Astrocyte of the cerebellum (primary cell): ENCODE measurements at regions of chr1 and their contacts with region 1.

Region 1: DNA sequence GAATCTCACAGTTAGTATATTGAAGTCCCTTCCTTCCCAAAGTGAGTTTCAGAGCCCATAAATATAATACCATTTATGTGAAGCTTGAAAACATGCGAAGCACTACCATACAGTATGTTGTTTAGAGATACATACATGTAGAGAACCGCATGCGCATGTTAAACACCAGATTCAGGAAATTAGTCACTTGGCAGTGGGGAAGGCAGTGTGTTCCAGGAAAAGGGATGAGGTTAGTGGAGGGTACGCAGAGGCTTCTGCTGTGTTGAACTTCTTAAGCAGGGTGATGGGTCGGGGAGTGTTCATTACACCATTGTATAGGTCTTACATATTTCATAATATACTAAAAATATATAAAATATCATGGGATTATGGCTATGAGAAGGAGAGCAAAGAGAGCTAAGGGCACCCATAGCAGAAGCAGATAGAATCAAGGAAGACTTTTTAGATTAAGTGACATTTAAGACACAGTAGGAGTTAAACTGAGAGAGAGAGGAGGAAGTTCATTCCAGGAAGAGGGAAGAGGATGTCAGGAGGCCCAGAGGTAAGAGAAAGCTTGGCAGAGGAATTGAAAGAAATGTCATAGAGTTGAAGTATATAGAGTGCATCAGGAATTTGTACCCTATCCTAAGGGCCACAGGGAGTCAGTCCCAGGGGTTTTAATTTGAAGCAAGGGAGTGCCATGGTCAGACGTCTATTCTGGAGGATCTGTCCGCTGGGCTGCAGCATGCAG is 43.5 kb upstream of the SARS1 start:
- DNase-seq: no peak
- H3K4me3 ChIP-seq: no peak overlapping the region
- CTCF ChIP-seq: no peak

Region 2: DNA sequence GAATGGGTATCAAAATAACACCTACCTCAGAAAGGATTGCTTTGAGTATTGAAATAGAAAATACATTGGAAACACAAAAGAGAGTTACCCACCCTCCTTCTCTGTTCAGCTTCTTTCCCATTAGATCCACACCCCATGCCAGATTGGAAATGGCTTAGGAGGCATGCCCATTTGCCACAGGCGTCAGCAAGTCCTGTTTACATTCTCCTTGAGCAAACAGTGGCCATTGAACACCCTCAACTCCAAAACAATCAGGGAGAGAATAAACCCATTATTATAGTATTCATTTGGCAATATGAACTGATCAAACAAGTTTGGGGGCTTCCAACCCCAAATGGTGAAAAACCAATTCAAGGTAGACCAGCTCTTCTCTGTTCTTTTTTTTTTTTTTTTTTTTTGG is 53.9 kb before region 1 on chr1:
- in situ Hi-C with region 1: loop called (anchors 5 kb)
- DNase-seq: no peak
- H3K4me3 ChIP-seq: no peak overlapping the region
- CTCF ChIP-seq: no peak

Region 3: DNA sequence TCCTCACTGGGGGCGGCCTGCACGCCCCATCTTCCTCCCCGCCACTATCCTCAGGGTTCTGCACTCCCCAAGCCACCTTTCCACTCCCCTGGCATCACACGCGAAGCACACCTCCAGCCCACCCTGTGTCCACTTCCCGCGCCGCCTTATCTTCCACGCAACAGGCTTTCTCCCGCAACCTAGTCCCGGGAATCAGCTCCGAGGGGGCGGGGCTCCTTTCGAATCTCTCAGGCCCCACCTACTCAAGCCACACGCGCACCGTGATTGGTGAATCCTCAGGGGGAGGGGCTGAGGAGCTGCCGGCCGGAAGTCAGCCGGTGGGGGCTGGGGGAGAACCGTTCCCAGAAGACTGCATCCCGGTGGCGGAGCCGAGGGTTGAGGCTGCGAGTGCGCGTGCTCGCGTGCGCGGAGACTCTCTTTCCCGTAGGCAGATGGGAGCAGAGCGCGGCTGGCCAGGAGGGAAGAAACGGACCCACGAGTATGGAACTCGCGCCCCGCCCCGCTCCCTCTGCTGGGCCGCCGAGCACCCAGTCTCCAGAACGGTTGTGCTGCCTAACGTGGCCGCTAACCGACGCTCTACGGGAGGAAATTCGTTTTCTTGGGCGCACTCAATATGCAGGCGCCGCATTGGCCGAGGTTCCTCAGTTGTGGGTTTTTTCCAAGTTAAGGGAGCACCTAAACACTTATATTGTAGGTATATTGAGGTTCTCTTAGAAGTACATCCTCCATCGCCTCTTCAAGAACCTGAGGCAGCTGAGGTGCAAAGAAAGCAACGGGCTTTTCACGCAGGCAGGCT is 113.0 kb after region 1 on chr1 and contains the start of gene PSRC1:
- in situ Hi-C with region 1: no loop called
- DNase-seq: peak; percentile 89
- H3K4me3 ChIP-seq: peak within 1 kb of the TSS; percentile 81
- CTCF ChIP-seq: peak; percentile 37